ENCODE measurements at regions of chr12 and their contacts with region 1.

Region 1: GRCh38 chr12:31274520-31275300 is 51.2 kb downstream of the SINHCAF start:
- DNase-seq: no peak
- H3K4me3 ChIP-seq: no peak overlapping the region
- H3K4me3 Mint-ChIP-seq: no peak overlapping the region
- H3K27ac ChIP-seq: no peak overlapping the region
- H3K27ac Mint-ChIP-seq: peak overlapping the region in 2 of 7 donors; percentile 14 to 44
- H3K4me1 ChIP-seq: no peaks in the 10 kb centered on the region
- H3K4me1 Mint-ChIP-seq: peaks cover 0 to 4% (median 0%) of the 10 kb centered on the region in 4 donors
- H3K27me3 ChIP-seq: no peaks in the 10 kb centered on the region
- H3K27me3 Mint-ChIP-seq: no peaks in the 10 kb centered on the region

Region 2: DNA sequence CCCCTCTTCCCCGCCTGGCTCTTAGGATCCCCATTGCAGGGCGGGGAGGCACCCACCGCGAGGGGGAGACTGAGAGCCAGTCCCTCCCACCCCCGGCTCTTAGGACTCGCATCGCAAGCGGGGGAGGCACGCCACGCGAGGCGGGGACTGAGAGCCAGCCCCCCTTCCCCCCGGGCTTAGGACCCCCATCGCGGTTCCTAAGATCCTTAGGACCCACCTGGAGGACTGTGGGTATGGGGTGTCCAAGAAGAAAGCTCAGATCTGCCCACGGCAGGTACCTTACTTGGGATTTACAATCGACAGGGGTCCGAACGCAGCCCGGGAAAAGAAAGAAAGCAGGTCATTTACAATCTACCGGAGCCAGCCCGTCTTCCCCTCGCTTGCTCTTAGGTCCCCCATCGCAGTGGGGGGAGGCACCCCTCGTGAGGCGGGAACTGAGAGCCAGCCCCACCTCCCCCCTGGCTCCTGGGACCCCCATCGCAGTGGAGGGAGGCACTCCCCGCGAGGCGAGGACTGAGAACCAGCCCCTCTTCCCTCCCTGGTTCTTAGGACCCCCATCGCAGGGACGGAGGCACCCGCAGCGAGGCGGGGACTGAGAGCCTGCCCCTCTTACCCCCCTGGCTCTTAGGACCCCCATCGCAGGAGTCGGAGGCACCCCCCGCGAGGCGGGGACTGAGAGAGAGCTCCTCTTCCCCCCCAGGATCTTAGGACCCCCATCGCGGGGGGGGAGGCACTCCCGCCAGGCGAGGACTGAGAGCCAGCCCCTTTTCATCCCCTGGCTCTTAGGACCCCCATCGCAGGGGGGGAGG is 157.3 kb before region 1 on chr12:
- CTCF ChIA-PET with region 1: interaction called, 9 read pairs
- POLR2A ChIA-PET with region 1: no interaction called
- intact Hi-C with region 1: loop called (anchors 5 kb)
- DNase-seq: peak; percentile 39 to 54 (median 45)
- H3K4me3 ChIP-seq: peak overlapping the region; percentile 22 to 62
- H3K4me3 Mint-ChIP-seq: peak overlapping the region; percentile 70 to 91 (median 81)
- H3K27ac ChIP-seq: peak overlapping the region; percentile 4
- H3K27ac Mint-ChIP-seq: peak overlapping the region in 3 of 7 donors; percentile 24 to 72 (median 36)
- H3K4me1 ChIP-seq: peaks cover 24% of the 10 kb centered on the region
- H3K4me1 Mint-ChIP-seq: peaks cover 0 to 35% (median 2%) of the 10 kb centered on the region in 4 donors
- H3K27me3 ChIP-seq: no peaks in the 10 kb centered on the region
- H3K27me3 Mint-ChIP-seq: peaks cover 2 to 33% of the 10 kb centered on the region in 2 donors

Region 3: DNA sequence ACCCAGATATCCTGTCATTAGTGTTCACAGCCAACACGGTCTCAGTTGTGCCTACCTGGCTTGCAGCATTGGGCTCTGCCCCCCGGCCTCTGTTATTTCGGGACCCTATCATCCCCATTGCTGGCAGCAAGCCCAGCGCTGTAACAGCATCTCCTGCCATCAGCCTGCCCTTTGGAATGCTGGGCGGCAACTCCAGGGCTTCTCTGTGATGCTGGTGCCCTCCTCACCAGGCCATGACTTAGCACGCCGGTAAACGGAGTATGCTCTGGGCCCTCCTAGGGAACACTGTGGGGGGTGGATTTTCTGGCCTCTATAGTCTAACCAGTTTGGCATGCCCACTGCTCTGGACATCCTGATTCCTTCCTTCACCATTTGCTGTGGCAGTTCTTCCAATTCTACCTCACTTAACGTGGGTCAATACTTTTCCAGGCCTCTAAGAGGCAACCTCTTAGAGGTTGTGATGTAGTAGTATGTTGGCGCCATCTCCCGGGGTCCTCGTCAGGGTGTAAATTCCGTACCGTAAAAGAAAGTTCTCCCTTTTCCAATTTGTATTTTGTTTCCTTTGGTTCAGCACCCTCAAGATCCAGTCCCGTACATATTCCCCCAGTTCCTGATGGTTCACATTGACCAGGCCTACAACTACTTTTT is 28.8 kb before region 1 on chr12:
- CTCF ChIA-PET with region 1: interaction called, 39 read pairs
- POLR2A ChIA-PET with region 1: no interaction called
- intact Hi-C with region 1: no loop called
- DNase-seq: no peak
- H3K4me3 ChIP-seq: no peak overlapping the region
- H3K4me3 Mint-ChIP-seq: no peak overlapping the region
- H3K27ac ChIP-seq: no peak overlapping the region
- H3K27ac Mint-ChIP-seq: no peak overlapping the region
- H3K4me1 ChIP-seq: no peaks in the 10 kb centered on the region
- H3K4me1 Mint-ChIP-seq: no peaks in the 10 kb centered on the region
- H3K27me3 ChIP-seq: no peaks in the 10 kb centered on the region
- H3K27me3 Mint-ChIP-seq: peaks cover 5 to 6% of the 10 kb centered on the region in 2 donors

Region 4: DNA sequence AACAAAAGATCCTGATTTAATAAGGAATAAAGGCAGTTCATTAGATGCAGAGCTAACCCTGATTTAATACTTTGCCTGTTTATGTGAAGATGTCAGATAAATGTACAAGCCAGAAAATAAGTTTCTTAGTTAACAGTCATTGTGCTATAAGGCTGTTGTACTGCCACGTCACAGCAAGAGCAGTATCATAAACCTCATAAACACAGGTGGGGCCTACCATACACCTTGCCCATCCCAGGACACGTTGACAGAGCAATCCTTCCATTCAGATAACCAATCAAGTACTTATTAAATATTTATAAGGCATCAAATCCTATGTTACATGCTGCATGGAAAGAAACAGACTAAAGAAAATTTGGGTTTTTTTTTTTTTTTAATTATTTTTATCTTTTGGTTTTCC is 14.7 kb after region 1 on chr12:
- CTCF ChIA-PET with region 1: interaction called, 45 read pairs
- POLR2A ChIA-PET with region 1: no interaction called
- intact Hi-C with region 1: no loop called
- DNase-seq: no peak
- H3K4me3 ChIP-seq: no peak overlapping the region
- H3K4me3 Mint-ChIP-seq: no peak overlapping the region
- H3K27ac ChIP-seq: no peak overlapping the region
- H3K27ac Mint-ChIP-seq: peak overlapping the region in 1 of 7 donors; percentile 45
- H3K4me1 ChIP-seq: no peaks in the 10 kb centered on the region
- H3K4me1 Mint-ChIP-seq: peaks cover 0 to 7% (median 1%) of the 10 kb centered on the region in 4 donors
- H3K27me3 ChIP-seq: no peaks in the 10 kb centered on the region
- H3K27me3 Mint-ChIP-seq: no peaks in the 10 kb centered on the region

Region 5: DNA sequence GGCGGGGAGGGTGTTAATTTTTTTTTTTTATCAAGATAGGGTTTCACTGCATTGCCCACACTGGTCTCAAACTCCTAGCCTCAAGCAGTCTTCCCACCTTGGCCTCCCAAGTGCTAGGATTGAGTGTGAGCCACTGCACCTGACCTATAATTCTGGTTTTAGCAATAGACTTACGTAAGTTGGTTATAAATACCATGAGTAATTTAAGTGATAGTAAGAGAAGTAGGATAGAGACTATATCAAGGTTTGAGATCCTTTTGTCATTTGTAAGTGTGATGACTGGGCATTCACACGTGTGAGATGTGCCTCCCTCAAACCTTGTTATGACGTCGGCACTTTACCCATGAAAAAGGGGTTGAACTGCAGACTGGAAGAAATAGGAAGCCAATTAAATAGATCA is 28.8 kb after region 1 on chr12:
- CTCF ChIA-PET with region 1: interaction called, 20 read pairs
- POLR2A ChIA-PET with region 1: no interaction called
- intact Hi-C with region 1: no loop called
- DNase-seq: no peak
- H3K4me3 ChIP-seq: no peak overlapping the region
- H3K4me3 Mint-ChIP-seq: no peak overlapping the region
- H3K27ac ChIP-seq: no peak overlapping the region
- H3K27ac Mint-ChIP-seq: peak overlapping the region in 1 of 7 donors; percentile 35
- H3K4me1 ChIP-seq: no peaks in the 10 kb centered on the region
- H3K4me1 Mint-ChIP-seq: peaks cover 35 to 53% (median 45%) of the 10 kb centered on the region in 4 donors
- H3K27me3 ChIP-seq: no peaks in the 10 kb centered on the region
- H3K27me3 Mint-ChIP-seq: no peaks in the 10 kb centered on the region

Region 6: DNA sequence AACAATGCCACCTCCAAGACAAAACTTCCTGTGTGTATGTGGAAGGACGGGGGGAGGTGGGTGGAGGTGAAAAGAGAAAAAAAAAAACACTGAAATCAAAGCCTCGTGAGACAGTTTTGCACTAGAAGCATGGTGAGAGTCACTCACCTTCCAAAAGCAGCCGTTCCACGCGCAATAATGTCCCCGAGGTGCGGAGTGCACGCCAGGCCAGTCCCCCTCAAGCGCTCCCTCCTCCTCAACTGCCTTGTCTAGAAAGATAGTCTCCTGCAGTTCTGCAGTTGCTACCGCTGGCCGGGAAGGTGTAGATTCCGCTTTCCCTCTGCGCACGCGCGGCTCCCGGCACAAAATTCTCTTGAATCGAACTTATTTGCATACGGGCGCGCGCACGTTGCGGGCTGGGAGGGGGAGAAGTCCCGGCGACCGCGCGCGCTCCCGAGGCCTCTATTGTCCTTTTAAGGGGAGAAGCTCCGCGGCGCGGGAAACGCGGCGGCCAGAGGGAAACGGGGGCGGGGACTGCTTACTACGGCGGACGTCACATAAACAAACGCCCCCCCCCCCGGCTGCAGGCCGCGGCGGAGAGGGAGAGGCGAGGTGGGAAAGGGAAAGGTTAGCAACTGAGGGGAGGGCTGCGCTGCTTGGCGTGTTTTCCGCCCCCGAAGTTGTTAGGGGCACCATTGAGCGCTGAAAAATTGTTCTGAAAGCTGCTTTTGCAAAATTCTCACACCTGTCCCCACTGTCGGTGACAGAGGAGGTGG is 51.3 kb after region 1 on chr12 and contains the start of gene SINHCAF:
- CTCF ChIA-PET with region 1: interaction called, 27 read pairs
- POLR2A ChIA-PET with region 1: no interaction called
- intact Hi-C with region 1: no loop called
- DNase-seq: peak; percentile 97 to 99 (median 98)
- H3K4me3 ChIP-seq: peak within 1 kb of the TSS; percentile 88 to 89
- H3K4me3 Mint-ChIP-seq: peak within 1 kb of the TSS; percentile 88 to 99 (median 97)
- H3K27ac ChIP-seq: peak within 1 kb of the TSS; percentile 87
- H3K27ac Mint-ChIP-seq: peak within 1 kb of the TSS; percentile 93 to 99 (median 98)
- H3K4me1 ChIP-seq: peaks cover 25% of the 10 kb centered on the region
- H3K4me1 Mint-ChIP-seq: peaks cover 21 to 44% (median 27%) of the 10 kb centered on the region in 4 donors
- H3K27me3 ChIP-seq: no peaks in the 10 kb centered on the region
- H3K27me3 Mint-ChIP-seq: peaks cover 0 to 2% of the 10 kb centered on the region in 2 donors
- total RNA-seq, gene SINHCAF: 95.8 to 98.5 TPM